Panc1 (cell line): ENCODE measurements at regions of chr17 and their contacts with region 1.

Region 1: DNA sequence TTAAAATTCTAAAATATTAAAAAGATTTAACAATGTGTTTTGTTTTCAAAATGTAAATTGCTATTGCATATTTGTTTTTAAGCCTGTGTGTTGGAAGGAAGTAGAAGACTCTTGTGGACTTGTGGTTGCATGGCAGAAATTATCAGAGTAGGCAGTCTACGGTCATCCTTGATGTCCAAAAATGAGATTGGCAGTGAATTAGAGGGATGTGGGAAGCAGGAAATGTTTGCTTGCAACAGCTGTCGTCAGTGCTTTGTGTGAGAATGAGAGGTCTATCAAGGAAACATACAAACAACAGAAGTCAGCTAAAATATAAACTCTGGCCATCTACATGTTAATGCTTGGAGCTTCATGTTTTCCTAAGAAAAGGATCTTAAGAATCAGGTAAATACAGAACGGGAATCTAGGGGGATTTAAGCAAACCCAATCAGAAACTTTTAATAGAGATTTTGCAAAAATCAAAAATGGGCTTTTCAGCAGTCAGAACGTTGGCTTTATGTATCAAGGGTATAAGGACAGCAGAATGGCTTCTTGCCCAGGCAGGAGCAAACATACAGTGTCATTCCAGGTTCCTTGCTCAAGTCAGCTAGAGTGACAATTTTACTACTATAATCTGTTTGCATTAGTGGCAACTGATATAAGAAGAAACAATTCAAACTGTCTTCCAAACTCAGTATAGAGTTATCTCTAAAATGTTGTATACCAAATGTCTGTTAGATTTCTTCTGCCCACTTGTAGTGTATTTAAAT is 196.7 kb downstream of the CYB561 start:
- DNase-seq: no peak
- ATAC-seq: no peak
- H3K4me3 ChIP-seq: no peak overlapping the region
- H3K27ac ChIP-seq: peak overlapping the region; percentile 40; the same call in 1 of the 2 replicates
- H3K4me1 ChIP-seq: peaks cover 5% of the 10 kb centered on the region
- H3K27me3 ChIP-seq: no peaks in the 10 kb centered on the region
- CTCF ChIP-seq: no peak

Region 2: DNA sequence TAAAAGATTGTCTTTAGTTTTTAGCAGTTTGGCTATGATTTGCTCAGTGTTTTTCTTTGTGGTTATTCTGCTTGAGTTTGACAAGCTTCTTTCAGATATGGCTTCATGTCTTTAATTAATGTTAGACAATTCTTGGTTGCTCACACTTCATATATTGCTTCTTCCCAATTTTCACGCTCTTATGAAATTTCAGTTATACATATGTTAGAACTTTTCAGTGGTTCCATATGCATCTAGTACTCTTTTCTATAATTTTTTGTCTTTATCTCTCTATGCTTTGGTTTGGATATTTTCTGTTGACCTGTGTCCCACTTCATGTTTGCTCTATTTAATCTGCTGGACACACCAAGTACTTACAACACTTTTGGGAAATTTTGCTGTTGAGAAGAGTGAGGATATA is 241.3 kb before region 1 on chr17:
- CTCF ChIA-PET with region 1: no interaction called
- POLR2A ChIA-PET with region 1: no interaction called
- in situ Hi-C with region 1: no loop called
- intact Hi-C with region 1: no loop called
- DNase-seq: no peak
- ATAC-seq: no peak
- H3K4me3 ChIP-seq: no peak overlapping the region
- H3K27ac ChIP-seq: no peak overlapping the region
- H3K4me1 ChIP-seq: peaks cover 2% of the 10 kb centered on the region; the same call in 1 of the 2 replicates
- H3K27me3 ChIP-seq: no peaks in the 10 kb centered on the region
- CTCF ChIP-seq: no peak

Region 3: GRCh38 chr17:63140255-63140654 is 109.2 kb before region 1 on chr17:
- CTCF ChIA-PET with region 1: no interaction called
- POLR2A ChIA-PET with region 1: no interaction called
- in situ Hi-C with region 1: no loop called
- intact Hi-C with region 1: no loop called
- DNase-seq: no peak
- ATAC-seq: no peak
- H3K4me3 ChIP-seq: no peak overlapping the region
- H3K27ac ChIP-seq: no peak overlapping the region
- H3K4me1 ChIP-seq: no peaks in the 10 kb centered on the region
- H3K27me3 ChIP-seq: no peaks in the 10 kb centered on the region
- CTCF ChIP-seq: no peak

Region 4: GRCh38 chr17:63332286-63332685 is 82.9 kb after region 1 on chr17:
- CTCF ChIA-PET with region 1: no interaction called
- POLR2A ChIA-PET with region 1: interaction called, 13 read pairs
- in situ Hi-C with region 1: no loop called
- intact Hi-C with region 1: no loop called
- DNase-seq: no peak
- ATAC-seq: no peak
- H3K4me3 ChIP-seq: no peak overlapping the region
- H3K27ac ChIP-seq: no peak overlapping the region
- H3K4me1 ChIP-seq: no peaks in the 10 kb centered on the region
- H3K27me3 ChIP-seq: no peaks in the 10 kb centered on the region
- CTCF ChIP-seq: no peak